Cardiac septum (tissue), 1 donor: ENCODE measurements at regions of chr14 and their contacts with region 1.

Region 1: GRCh38 chr14:102917469-102918211 is 4.8 kb upstream of the AMN start:
- DNase-seq: no peak

Region 2: DNA sequence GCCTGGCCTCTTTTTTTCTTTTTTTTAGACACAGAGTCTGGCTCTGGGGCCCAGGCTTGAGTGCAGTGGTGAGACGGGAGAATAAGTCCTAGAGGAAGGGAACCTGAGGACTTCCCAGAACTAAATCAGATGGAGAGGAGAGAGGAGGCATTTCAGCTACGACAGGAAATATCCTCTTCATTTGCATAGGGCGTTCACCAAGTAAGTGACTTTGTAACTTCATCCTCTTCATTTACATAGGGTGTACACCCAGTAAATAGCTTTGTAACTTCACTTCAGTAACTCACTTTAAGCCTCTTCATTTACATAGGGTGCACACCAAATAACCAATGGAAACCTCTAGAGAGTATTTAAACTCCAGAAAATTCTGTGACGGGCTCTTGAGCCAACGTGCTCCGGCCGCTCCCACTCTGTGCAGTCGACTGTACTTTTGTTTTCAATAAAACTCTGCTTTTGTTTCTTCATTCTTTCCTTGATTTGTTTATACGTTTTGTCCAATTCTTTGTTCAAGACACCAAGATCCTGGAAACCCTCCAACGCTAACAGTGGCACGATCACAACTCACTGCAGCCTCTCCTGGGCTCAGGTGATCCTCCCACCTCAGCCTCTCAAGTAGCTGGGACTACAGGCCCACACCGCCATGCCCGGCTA is 386.7 kb before region 1 on chr14:
- intact Hi-C with region 1: no loop called
- DNase-seq: no peak

Region 3: GRCh38 chr14:102694530-102695166 is 223.0 kb before region 1 on chr14:
- intact Hi-C with region 1: loop called (anchors 5 kb)
- DNase-seq: no peak

Region 4: GRCh38 chr14:102774391-102775153 is 143.1 kb before region 1 on chr14:
- intact Hi-C with region 1: loop called (anchors 5 kb)
- DNase-seq: no peak

Region 5: GRCh38 chr14:102824832-102825231 is 92.8 kb before region 1 on chr14:
- intact Hi-C with region 1: loop called (anchors 5 kb)
- DNase-seq: peak; percentile 79